ENCODE measurements at regions of chr7 and their contacts with region 1.

Region 1: DNA sequence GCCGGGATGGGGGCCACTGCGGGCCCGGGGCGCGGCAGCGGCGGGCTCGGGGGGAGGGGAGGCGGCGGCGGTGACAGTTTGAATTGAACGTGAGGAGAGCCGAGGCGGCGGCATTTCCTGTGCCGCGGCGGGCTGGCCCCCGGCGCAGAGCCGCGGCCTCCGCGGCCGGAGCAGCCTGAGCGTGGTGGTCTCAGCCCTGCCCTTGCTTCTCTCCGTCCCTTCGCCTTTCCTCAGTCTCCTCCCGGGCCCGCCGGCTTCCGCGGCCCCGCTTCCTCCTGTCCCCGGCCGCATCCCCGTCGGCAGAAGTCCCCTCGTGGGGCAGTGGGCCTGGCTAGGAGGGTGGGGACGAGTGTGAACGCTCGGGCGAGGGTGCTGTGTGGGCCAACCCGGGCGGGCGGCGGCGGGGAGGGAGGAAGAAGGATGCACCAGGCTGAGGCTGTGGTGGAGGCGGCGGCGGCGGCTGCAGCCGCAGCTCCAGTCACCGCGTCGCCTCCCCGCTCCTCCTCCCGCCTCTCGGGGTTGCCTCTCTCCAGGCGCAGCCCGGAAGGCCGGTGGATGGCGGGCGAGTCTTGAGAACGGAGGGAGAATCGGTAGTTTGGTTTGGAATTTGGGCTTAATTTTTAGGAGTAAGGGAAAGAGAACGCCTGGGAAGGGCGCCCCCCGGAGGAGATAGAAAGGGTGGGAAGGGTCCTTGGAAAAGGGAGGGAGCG is 690 bp downstream of the SEPTIN7 start:
- DNase-seq: peak; percentile 65 to 78 (median 75)
- ATAC-seq: peak; percentile 55
- H3K4me3 ChIP-seq: peak overlapping the region; percentile 78
- H3K4me3 Mint-ChIP-seq: peak overlapping the region; percentile 78 to 98 (median 93)
- H3K27ac ChIP-seq: peak overlapping the region; percentile 96
- H3K27ac Mint-ChIP-seq: peak overlapping the region; percentile 58 to 100 (median 99)
- H3K4me1 ChIP-seq: peaks cover 37 to 49% of the 10 kb centered on the region in 2 donors
- H3K4me1 Mint-ChIP-seq: peaks cover 43 to 59% (median 52%) of the 10 kb centered on the region in 7 donors
- H3K27me3 ChIP-seq: no peaks in the 10 kb centered on the region
- H3K27me3 Mint-ChIP-seq: no peaks in the 10 kb centered on the region

Region 2: DNA sequence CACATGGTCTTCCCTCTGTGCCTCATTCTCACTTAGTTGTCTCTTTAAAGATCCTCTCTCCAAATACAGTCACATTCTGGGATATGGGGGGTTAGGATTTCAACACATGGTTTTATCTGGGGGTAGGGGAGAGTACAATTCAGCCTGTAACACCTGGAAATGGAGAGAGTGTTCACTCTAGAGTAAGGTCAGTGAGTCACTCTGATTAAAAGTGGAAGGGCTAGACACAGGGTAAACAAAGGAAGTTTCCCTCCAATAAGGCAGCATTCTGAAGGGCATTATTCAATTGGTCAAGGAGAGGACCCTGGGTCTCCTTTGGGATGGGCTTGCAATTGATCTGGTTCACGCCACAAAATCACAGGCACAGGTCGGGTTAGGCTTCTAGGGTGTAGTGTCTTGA is 1376.4 kb before region 1 on chr7:
- CTCF ChIA-PET with region 1: no interaction called
- POLR2A ChIA-PET with region 1: no interaction called
- intact Hi-C with region 1: no loop called
- DNase-seq: no peak
- ATAC-seq: no peak
- H3K4me3 ChIP-seq: no peak overlapping the region
- H3K4me3 Mint-ChIP-seq: no peak overlapping the region
- H3K27ac ChIP-seq: no peak overlapping the region
- H3K27ac Mint-ChIP-seq: no peak overlapping the region
- H3K4me1 ChIP-seq: no peaks in the 10 kb centered on the region
- H3K4me1 Mint-ChIP-seq: no peaks in the 10 kb centered on the region
- H3K27me3 ChIP-seq: no peaks in the 10 kb centered on the region
- H3K27me3 Mint-ChIP-seq: no peaks in the 10 kb centered on the region

Region 3: GRCh38 chr7:35037526-35038339 is 763.8 kb before region 1 on chr7:
- CTCF ChIA-PET with region 1: no interaction called
- POLR2A ChIA-PET with region 1: no interaction called
- intact Hi-C with region 1: loop called (anchors 1 to 2 kb)
- DNase-seq: peak; percentile 64 to 93 (median 81)
- ATAC-seq: peak; percentile 83
- H3K4me3 ChIP-seq: peak overlapping the region; percentile 68
- H3K4me3 Mint-ChIP-seq: peak overlapping the region; percentile 77 to 96 (median 89)
- H3K27ac ChIP-seq: peak overlapping the region; percentile 61
- H3K27ac Mint-ChIP-seq: peak overlapping the region; percentile 11 to 90 (median 73)
- H3K4me1 ChIP-seq: peaks cover 17% of the 10 kb centered on the region in 2 donors
- H3K4me1 Mint-ChIP-seq: peaks cover 19 to 38% (median 30%) of the 10 kb centered on the region in 7 donors
- H3K27me3 ChIP-seq: no peaks in the 10 kb centered on the region
- H3K27me3 Mint-ChIP-seq: peaks cover 0 to 21% (median 0%) of the 10 kb centered on the region in 5 donors

Region 4: GRCh38 chr7:35424869-35425495 is 376.6 kb before region 1 on chr7:
- CTCF ChIA-PET with region 1: no interaction called
- POLR2A ChIA-PET with region 1: no interaction called
- intact Hi-C with region 1: no loop called
- DNase-seq: peak in 8 of 9 donors; percentile 17 to 51 (median 42)
- ATAC-seq: peak; percentile 85
- H3K4me3 ChIP-seq: no peak overlapping the region
- H3K4me3 Mint-ChIP-seq: no peak overlapping the region
- H3K27ac ChIP-seq: no peak overlapping the region
- H3K27ac Mint-ChIP-seq: no peak overlapping the region
- H3K4me1 ChIP-seq: no peaks in the 10 kb centered on the region
- H3K4me1 Mint-ChIP-seq: peaks cover 0 to 7% (median 0%) of the 10 kb centered on the region in 7 donors
- H3K27me3 ChIP-seq: no peaks in the 10 kb centered on the region
- H3K27me3 Mint-ChIP-seq: peaks cover 0 to 35% (median 23%) of the 10 kb centered on the region in 5 donors

Region 5: DNA sequence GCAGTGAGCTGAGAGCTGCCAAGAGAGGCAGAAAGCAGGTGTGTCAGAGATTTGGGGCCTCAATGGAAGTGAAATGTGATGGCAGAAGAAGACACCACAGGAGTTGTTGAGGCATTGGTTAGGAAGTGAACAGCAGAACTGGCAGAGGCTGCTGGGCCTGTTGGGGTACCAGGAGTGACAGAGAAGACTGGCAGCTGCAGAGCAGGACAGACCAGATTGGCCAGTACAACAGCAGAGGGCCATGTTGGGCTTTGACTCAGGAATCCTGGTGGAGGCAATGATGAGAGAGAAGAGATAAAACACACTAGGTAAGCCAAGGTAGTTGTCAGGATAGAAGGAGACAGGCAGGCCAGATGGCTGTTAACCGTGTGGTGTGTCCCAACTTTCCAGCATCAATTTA is 86.7 kb before region 1 on chr7:
- CTCF ChIA-PET with region 1: interaction called, 13 read pairs
- POLR2A ChIA-PET with region 1: interaction called, 41 read pairs
- intact Hi-C with region 1: no loop called
- DNase-seq: no peak
- ATAC-seq: peak; percentile 22
- H3K4me3 ChIP-seq: no peak overlapping the region
- H3K4me3 Mint-ChIP-seq: no peak overlapping the region
- H3K27ac ChIP-seq: no peak overlapping the region
- H3K27ac Mint-ChIP-seq: peak overlapping the region in 2 of 9 donors; percentile 5 to 34
- H3K4me1 ChIP-seq: peaks cover 4% of the 10 kb centered on the region in 2 donors
- H3K4me1 Mint-ChIP-seq: peaks cover 5 to 17% (median 8%) of the 10 kb centered on the region in 7 donors
- H3K27me3 ChIP-seq: no peaks in the 10 kb centered on the region
- H3K27me3 Mint-ChIP-seq: peaks cover 0 to 28% (median 0%) of the 10 kb centered on the region in 5 donors

Region 6: DNA sequence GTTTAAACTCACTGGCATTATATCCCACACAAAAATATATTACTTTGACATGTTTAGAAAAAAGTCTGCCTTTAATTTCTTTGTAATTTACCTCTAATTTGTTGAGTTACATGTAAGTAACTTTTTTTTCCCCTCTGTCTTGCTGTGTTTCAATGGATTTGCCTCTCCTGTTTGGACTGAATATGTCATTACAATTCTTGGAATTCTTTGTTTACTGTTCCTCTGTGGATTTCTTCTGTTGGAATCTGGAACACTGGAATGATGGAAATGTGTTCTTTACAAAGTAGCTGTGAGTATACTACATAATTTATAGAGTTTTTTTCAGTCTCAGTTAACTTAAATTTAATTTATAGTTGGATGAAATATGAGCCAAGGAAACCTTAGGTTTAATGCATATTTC is 29.7 kb after region 1 on chr7:
- CTCF ChIA-PET with region 1: no interaction called
- POLR2A ChIA-PET with region 1: interaction called, 6 read pairs
- intact Hi-C with region 1: loop called in 1 of 2 experiments (anchors 2 kb)
- DNase-seq: no peak
- ATAC-seq: no peak
- H3K4me3 ChIP-seq: no peak overlapping the region
- H3K4me3 Mint-ChIP-seq: peak overlapping the region in 3 of 10 donors; percentile 9 to 46 (median 22)
- H3K27ac ChIP-seq: no peak overlapping the region
- H3K27ac Mint-ChIP-seq: peak overlapping the region in 5 of 9 donors; percentile 1 to 41 (median 23)
- H3K4me1 ChIP-seq: peaks cover 4 to 17% of the 10 kb centered on the region in 2 donors
- H3K4me1 Mint-ChIP-seq: peaks cover 22 to 84% (median 68%) of the 10 kb centered on the region in 7 donors
- H3K27me3 ChIP-seq: no peaks in the 10 kb centered on the region
- H3K27me3 Mint-ChIP-seq: no peaks in the 10 kb centered on the region

Region 7: GRCh38 chr7:35894721-35895120 is 93.2 kb after region 1 on chr7:
- CTCF ChIA-PET with region 1: no interaction called
- POLR2A ChIA-PET with region 1: interaction called, 6 read pairs
- intact Hi-C with region 1: loop called (anchors 5 kb)
- DNase-seq: no peak
- ATAC-seq: no peak
- H3K4me3 ChIP-seq: no peak overlapping the region
- H3K4me3 Mint-ChIP-seq: no peak overlapping the region
- H3K27ac ChIP-seq: no peak overlapping the region
- H3K27ac Mint-ChIP-seq: peak overlapping the region in 8 of 9 donors; percentile 2 to 83 (median 64)
- H3K4me1 ChIP-seq: no peaks in the 10 kb centered on the region
- H3K4me1 Mint-ChIP-seq: peaks cover 3 to 39% (median 27%) of the 10 kb centered on the region in 7 donors
- H3K27me3 ChIP-seq: no peaks in the 10 kb centered on the region
- H3K27me3 Mint-ChIP-seq: no peaks in the 10 kb centered on the region

Region 8: DNA sequence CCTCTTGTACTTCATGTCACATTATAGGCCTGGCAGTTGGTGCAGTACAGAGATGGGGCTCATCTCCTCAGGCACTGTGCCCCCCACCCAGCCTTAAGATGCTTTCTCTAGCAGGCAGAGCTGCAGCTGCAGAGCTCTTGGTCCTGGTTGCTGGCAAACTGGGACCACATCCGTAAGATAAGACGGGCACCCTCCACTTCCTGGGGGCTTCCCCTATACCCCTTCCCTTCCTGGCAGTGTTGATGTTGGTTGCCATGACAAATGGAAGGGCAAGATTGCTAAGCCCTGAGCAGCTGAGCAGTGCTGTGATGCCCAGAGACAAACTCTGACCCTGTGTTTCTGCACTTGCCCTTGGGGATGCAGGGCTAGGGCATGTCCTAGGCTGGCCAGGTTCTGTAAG is 484.7 kb after region 1 on chr7:
- CTCF ChIA-PET with region 1: no interaction called
- POLR2A ChIA-PET with region 1: interaction called, 17 read pairs
- intact Hi-C with region 1: loop called in 1 of 2 experiments (anchors 1 kb)
- DNase-seq: peak in 8 of 9 donors; percentile 19 to 88 (median 78)
- ATAC-seq: peak; percentile 73
- H3K4me3 ChIP-seq: peak overlapping the region; percentile 15
- H3K4me3 Mint-ChIP-seq: peak overlapping the region; percentile 83 to 99 (median 88)
- H3K27ac ChIP-seq: peak overlapping the region; percentile 75
- H3K27ac Mint-ChIP-seq: peak overlapping the region; percentile 96 to 100 (median 100)
- H3K4me1 ChIP-seq: peaks cover 43 to 52% of the 10 kb centered on the region in 2 donors
- H3K4me1 Mint-ChIP-seq: peaks cover 48 to 72% (median 63%) of the 10 kb centered on the region in 7 donors
- H3K27me3 ChIP-seq: no peaks in the 10 kb centered on the region
- H3K27me3 Mint-ChIP-seq: peaks cover 0 to 3% (median 0%) of the 10 kb centered on the region in 5 donors

Region 9: GRCh38 chr7:36389371-36390198 is 588.0 kb after region 1 on chr7 and contains the start of gene ANLN:
- CTCF ChIA-PET with region 1: no interaction called
- POLR2A ChIA-PET with region 1: no interaction called
- intact Hi-C with region 1: loop called in 1 of 2 experiments (anchors 2 kb)
- DNase-seq: peak; percentile 71 to 91 (median 82)
- ATAC-seq: peak; percentile 98
- H3K4me3 ChIP-seq: peak within 1 kb of the TSS; percentile 78
- H3K4me3 Mint-ChIP-seq: peak within 1 kb of the TSS; percentile 77 to 90 (median 85)
- H3K27ac ChIP-seq: peak within 1 kb of the TSS; percentile 67
- H3K27ac Mint-ChIP-seq: peak within 1 kb of the TSS; percentile 72 to 90 (median 81)
- H3K4me1 ChIP-seq: peaks cover 8 to 19% of the 10 kb centered on the region in 2 donors
- H3K4me1 Mint-ChIP-seq: peaks cover 12 to 39% (median 26%) of the 10 kb centered on the region in 7 donors
- H3K27me3 ChIP-seq: no peaks in the 10 kb centered on the region
- H3K27me3 Mint-ChIP-seq: peaks cover 0 to 12% (median 0%) of the 10 kb centered on the region in 5 donors
- total RNA-seq, gene ANLN: 0.35 to 48.6 (median 0.82) TPM

Measured in naive thymus-derived CD4-positive, alpha-beta T cell (primary cell).